ENCODE measurements at regions of chr7 and their contacts with region 1.

Region 1: DNA sequence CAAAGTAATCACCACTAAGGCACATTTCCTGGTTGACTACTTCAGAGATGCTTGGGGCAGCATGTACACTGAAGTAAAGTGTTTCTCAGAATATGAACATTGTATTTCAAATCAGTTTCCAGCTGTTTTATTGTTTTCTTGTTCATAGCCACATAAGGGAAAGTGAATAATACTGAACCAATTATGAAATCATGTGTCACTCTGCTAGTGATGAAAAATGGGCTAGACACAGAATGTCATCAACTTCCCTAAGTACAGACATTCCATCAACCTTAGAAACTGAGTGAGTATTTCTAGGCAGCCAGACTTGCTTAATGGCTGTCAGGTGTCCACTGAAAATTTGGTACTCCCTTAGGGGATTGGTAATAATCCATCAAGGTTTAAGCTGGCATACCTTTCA is 603.5 kb downstream of the ARL4A start:
- DNase-seq: no peak
- ATAC-seq: no peak
- H3K4me3 ChIP-seq: no peak overlapping the region
- H3K4me3 Mint-ChIP-seq: no peak overlapping the region
- H3K27ac ChIP-seq: no peak overlapping the region
- H3K27ac Mint-ChIP-seq: no peak overlapping the region
- H3K4me1 ChIP-seq: no peaks in the 10 kb centered on the region
- H3K4me1 Mint-ChIP-seq: no peaks in the 10 kb centered on the region
- H3K27me3 ChIP-seq: no peaks in the 10 kb centered on the region
- H3K27me3 Mint-ChIP-seq: no peaks in the 10 kb centered on the region
- CTCF ChIP-seq: no peak

Region 2: DNA sequence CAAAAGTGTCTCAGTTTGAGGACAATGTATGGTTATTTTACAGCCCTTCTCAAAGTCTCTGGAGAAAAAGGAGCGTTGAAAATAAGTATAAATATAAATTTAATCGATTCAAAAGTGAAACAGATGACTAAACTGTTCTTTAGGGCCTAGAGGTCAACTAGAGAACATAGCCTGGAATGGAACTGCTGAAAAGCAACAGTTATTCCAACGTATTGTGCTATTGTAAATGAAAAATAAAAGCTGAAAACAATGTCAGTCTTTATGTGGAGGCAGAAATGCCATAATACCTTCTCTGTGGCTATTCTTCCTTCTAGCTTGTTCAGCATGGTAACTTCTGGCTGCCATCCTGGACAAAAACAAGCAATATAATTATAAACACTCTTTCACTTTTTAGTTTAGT is 241.0 kb before region 1 on chr7:
- CTCF ChIA-PET with region 1: no interaction called
- POLR2A ChIA-PET with region 1: interaction called, 12 read pairs
- intact Hi-C with region 1: no loop called
- DNase-seq: no peak
- ATAC-seq: no peak
- H3K4me3 ChIP-seq: no peak overlapping the region
- H3K4me3 Mint-ChIP-seq: no peak overlapping the region
- H3K27ac ChIP-seq: no peak overlapping the region
- H3K27ac Mint-ChIP-seq: no peak overlapping the region
- H3K4me1 ChIP-seq: peaks cover 0 to 3% of the 10 kb centered on the region in 2 donors
- H3K4me1 Mint-ChIP-seq: no peaks in the 10 kb centered on the region
- H3K27me3 ChIP-seq: no peaks in the 10 kb centered on the region
- H3K27me3 Mint-ChIP-seq: peaks cover 7% of the 10 kb centered on the region
- CTCF ChIP-seq: no peak

Region 3: GRCh38 chr7:13201628-13202027 is 89.3 kb before region 1 on chr7:
- CTCF ChIA-PET with region 1: no interaction called
- POLR2A ChIA-PET with region 1: no interaction called
- intact Hi-C with region 1: no loop called
- DNase-seq: no peak
- ATAC-seq: no peak
- H3K4me3 ChIP-seq: no peak overlapping the region
- H3K4me3 Mint-ChIP-seq: no peak overlapping the region
- H3K27ac ChIP-seq: no peak overlapping the region
- H3K27ac Mint-ChIP-seq: no peak overlapping the region
- H3K4me1 ChIP-seq: no peaks in the 10 kb centered on the region
- H3K4me1 Mint-ChIP-seq: no peaks in the 10 kb centered on the region
- H3K27me3 ChIP-seq: no peaks in the 10 kb centered on the region
- H3K27me3 Mint-ChIP-seq: no peaks in the 10 kb centered on the region
- CTCF ChIP-seq: no peak